ENCODE measurements at regions of chr17 and their contacts with region 1.

Region 1: GRCh38 chr17:29640413-29640812 is 17.7 kb upstream of the CORO6 start:
- DNase-seq: peak; percentile 79 to 81
- ATAC-seq: peak; percentile 35 to 41
- H3K4me3 ChIP-seq: peak overlapping the region; percentile 37 to 49 (median 41)
- H3K27ac ChIP-seq: peak overlapping the region; percentile 97 to 100 (median 98)
- H3K4me1 ChIP-seq: peaks cover 62 to 82% of the 10 kb centered on the region in 2 donors
- H3K27me3 ChIP-seq: no peaks in the 10 kb centered on the region
- CTCF ChIP-seq: no peak
- POLR2A ChIP-seq: peak; percentile 58 to 77

Region 2: GRCh38 chr17:28937044-28937729 is 703.2 kb before region 1 on chr17:
- in situ Hi-C with region 1: no loop called
- intact Hi-C with region 1: no loop called
- DNase-seq: no peak
- ATAC-seq: peak; percentile 53 to 65
- H3K4me3 ChIP-seq: no peak overlapping the region
- H3K27ac ChIP-seq: peak overlapping the region; percentile 80 to 97 (median 96)
- H3K4me1 ChIP-seq: peaks cover 69 to 71% of the 10 kb centered on the region in 2 donors
- H3K27me3 ChIP-seq: no peaks in the 10 kb centered on the region
- CTCF ChIP-seq: no peak
- POLR2A ChIP-seq: no peak

Region 3: GRCh38 chr17:29292992-29293889 is 347.2 kb before region 1 on chr17:
- in situ Hi-C with region 1: no loop called
- intact Hi-C with region 1: no loop called
- DNase-seq: peak; percentile 28 to 54
- ATAC-seq: peak; percentile 34 to 43
- H3K4me3 ChIP-seq: peak overlapping the region; percentile 88 to 97 (median 95)
- H3K27ac ChIP-seq: peak overlapping the region; percentile 95 to 100 (median 100)
- H3K4me1 ChIP-seq: peaks cover 33 to 38% of the 10 kb centered on the region in 2 donors
- H3K27me3 ChIP-seq: no peaks in the 10 kb centered on the region
- CTCF ChIP-seq: no peak
- POLR2A ChIP-seq: no peak

Region 4: GRCh38 chr17:29622337-29623282 is 17.8 kb before region 1 on chr17 and contains the start of gene CORO6:
- in situ Hi-C with region 1: no loop called
- intact Hi-C with region 1: loop called (anchors 1 kb)
- DNase-seq: peak; percentile 64 to 83
- ATAC-seq: peak; percentile 39 to 54
- H3K4me3 ChIP-seq: peak within 1 kb of the TSS; percentile 89 to 99 (median 96)
- H3K27ac ChIP-seq: peak within 1 kb of the TSS; percentile 98 to 100 (median 99)
- H3K4me1 ChIP-seq: peaks cover 62 to 65% of the 10 kb centered on the region in 2 donors
- H3K27me3 ChIP-seq: no peaks in the 10 kb centered on the region
- CTCF ChIP-seq: no peak
- POLR2A ChIP-seq: peak; percentile 99
- total RNA-seq, gene CORO6: 409 to 694 (median 563) TPM

Region 5: GRCh38 chr17:29710891-29711418 is 70.5 kb after region 1 on chr17:
- in situ Hi-C with region 1: loop called in 1 of 4 experiments (anchors 10 kb)
- intact Hi-C with region 1: loop called (anchors 2 kb)
- DNase-seq: peak in 1 of 2 donors; percentile 30
- ATAC-seq: peak; percentile 10 to 31
- H3K4me3 ChIP-seq: peak overlapping the region in 2 of 4 donors; percentile 6 to 21
- H3K27ac ChIP-seq: peak overlapping the region; percentile 82 to 100 (median 93)
- H3K4me1 ChIP-seq: peaks cover 81 to 83% of the 10 kb centered on the region in 2 donors
- H3K27me3 ChIP-seq: no peaks in the 10 kb centered on the region
- CTCF ChIP-seq: no peak
- POLR2A ChIP-seq: peak; percentile 48 to 72

Region 6: DNA sequence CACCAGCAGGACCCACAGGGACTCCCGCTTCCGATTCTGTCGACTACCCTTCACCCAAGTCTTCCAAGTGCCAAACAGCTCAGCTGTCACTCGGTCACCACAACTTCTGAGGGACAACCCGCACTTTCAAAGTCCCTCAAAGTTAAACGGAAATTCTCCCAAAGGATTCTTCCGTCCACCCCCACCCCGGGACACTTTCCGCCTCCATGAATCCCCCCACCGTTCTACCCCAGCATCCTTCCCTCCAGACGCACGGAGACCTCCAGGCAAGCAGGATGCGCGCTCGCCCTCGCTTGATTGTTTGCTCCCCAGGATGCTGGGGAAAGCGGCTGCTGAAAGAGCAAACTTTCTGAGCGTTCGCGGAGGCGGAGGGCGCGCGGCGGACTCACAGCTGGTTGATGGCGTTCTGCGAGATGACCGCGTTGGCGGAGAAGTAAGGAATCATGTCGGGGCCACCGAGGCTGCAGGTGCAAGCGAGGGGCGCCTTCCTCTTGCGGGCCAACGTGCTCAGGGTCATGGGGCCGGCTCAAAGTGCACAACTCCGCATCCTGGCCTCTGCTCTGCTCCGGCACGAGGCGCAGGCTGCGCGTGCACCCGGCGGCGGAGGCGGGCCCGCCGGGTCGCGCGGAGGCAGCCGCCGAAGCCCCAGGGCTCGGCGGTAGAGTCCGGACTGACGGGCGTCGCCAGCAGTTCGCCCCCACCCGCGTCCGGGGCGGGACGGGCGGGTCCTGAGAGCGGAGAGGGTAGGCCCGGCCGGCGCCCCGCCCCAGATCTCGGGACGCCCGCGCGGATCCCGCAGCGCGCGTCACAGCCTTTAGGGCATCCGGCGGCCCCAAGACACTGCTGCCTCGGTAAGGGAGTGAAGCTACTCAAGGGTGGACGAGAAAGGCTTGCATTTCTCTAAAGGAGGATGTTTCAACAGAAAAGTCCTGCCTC is 120.6 kb after region 1 on chr17:
- in situ Hi-C with region 1: loop called in 3 of 4 experiments (anchors 10 kb)
- intact Hi-C with region 1: loop called (anchors 5 kb)
- DNase-seq: peak; percentile 84 to 91
- ATAC-seq: peak; percentile 77 to 80
- H3K4me3 ChIP-seq: peak overlapping the region; percentile 68 to 88 (median 78)
- H3K27ac ChIP-seq: peak overlapping the region; percentile 90 to 97 (median 93)
- H3K4me1 ChIP-seq: peaks cover 33 to 52% of the 10 kb centered on the region in 2 donors
- H3K27me3 ChIP-seq: no peaks in the 10 kb centered on the region
- CTCF ChIP-seq: peak in 1 of 5 experiments; percentile 6
- POLR2A ChIP-seq: peak; percentile 92 to 96

Region 7: DNA sequence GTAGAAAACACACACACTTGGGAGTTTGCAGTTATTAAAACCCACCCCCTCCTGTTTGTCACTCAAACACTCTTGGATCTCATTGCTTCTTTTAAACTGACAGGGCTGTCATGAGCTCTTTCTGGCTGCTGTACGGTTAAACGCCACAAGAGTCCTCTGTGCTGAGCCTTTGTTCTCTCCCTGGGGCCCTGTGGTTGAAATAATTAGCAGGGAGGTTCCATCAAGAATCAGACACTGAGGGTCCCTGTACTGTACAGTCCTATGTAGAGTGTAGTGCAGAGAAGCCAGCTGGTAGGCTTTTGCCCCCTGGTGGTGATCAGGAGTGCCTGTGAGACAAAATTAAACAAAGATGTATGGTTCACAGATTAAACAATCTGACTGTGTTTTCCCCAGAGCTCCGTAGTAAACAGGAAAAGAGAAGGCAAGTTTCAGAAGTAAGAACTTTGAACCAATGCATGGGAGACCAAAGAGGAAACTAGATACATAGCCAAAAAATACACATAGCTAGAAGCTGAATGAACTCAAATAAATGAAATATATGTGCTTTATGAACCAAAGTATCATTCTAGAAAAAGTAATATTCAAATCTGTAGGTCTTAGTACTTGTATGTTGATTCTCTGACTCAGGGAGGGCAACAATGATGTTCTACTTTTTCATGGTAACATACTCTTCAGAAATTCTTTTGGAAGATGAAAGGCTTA is 291.0 kb after region 1 on chr17:
- in situ Hi-C with region 1: no loop called
- intact Hi-C with region 1: loop called (anchors 1 kb)
- DNase-seq: peak; percentile 27 to 53
- ATAC-seq: peak; percentile 55 to 56
- H3K4me3 ChIP-seq: peak overlapping the region; percentile 79 to 95 (median 90)
- H3K27ac ChIP-seq: peak overlapping the region; percentile 93 to 98 (median 94)
- H3K4me1 ChIP-seq: peaks cover 33 to 39% of the 10 kb centered on the region in 2 donors
- H3K27me3 ChIP-seq: no peaks in the 10 kb centered on the region
- CTCF ChIP-seq: peak; percentile 73 to 92 (median 89)
- POLR2A ChIP-seq: no peak